ENCODE measurements at regions of chr3 and their contacts with region 1.

Region 1: GRCh38 chr3:146326670-146327543 is 76.0 kb upstream of the PLSCR4 start:
- DNase-seq: no peak
- H3K4me3 ChIP-seq: no peak overlapping the region
- H3K27ac ChIP-seq: no peak overlapping the region
- H3K4me1 ChIP-seq: no peaks in the 10 kb centered on the region
- H3K27me3 ChIP-seq: no peaks in the 10 kb centered on the region
- CTCF ChIP-seq: peak in 2 of 3 experiments; percentile 20 to 44; a peak in 2 of 4 replicates
- EP300 ChIP-seq: no peak
- POLR2A ChIP-seq: no peak
- RAD21 ChIP-seq: peak; percentile 73 to 80

Region 2: DNA sequence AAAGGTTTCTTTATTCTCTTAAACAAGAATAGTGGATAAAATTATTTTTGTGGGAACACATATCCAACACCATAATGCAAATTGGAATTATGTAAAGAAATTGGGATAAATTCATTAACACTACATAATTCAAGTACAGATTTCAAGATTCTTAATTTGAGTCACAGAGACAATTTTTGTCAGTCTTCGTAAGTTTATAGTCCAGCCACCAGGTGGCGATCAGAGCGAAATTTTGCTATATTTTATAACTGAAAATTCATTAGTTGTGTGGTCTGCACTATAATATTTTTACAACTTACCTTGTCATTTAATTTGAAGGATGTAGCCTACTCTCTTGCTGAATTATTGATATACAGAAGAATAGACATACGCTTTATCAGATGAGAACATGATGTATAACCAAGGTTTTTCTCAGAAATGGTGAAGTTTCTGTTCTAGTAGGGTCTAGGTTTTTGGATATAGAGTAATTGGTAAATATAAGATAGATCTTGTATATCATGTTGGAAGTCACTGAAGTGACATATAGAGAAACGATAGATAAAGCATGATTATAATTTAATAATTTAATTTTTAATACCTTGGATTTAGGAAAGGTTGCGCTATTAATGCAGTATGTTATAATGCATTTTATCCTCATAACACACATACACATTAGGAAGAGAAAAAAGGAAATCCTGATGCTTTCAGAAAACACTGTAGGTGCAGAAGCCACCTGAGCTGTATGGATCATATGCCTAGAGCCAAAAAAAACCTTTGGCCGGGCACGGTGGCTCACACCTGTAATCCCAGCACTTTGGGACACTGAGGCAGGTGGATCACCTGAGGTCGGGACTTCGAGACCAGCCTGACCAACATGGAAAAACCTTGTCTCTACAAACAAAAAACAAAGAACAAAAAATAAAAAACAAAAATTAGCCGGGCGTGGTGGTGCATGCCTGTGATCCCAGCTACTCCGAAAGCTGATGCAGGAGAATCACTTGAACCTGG is 107.7 kb before region 1 on chr3:
- CTCF ChIA-PET with region 1: interaction called, 17 read pairs
- POLR2A ChIA-PET with region 1: no interaction called
- DNase-seq: no peak
- H3K4me3 ChIP-seq: no peak overlapping the region
- H3K27ac ChIP-seq: no peak overlapping the region
- H3K4me1 ChIP-seq: no peaks in the 10 kb centered on the region
- H3K27me3 ChIP-seq: no peaks in the 10 kb centered on the region
- CTCF ChIP-seq: peak in 2 of 3 experiments; percentile 31 to 46; a peak in 2 of 4 replicates
- EP300 ChIP-seq: no peak
- POLR2A ChIP-seq: no peak
- RAD21 ChIP-seq: peak; percentile 56 to 67

Region 3: DNA sequence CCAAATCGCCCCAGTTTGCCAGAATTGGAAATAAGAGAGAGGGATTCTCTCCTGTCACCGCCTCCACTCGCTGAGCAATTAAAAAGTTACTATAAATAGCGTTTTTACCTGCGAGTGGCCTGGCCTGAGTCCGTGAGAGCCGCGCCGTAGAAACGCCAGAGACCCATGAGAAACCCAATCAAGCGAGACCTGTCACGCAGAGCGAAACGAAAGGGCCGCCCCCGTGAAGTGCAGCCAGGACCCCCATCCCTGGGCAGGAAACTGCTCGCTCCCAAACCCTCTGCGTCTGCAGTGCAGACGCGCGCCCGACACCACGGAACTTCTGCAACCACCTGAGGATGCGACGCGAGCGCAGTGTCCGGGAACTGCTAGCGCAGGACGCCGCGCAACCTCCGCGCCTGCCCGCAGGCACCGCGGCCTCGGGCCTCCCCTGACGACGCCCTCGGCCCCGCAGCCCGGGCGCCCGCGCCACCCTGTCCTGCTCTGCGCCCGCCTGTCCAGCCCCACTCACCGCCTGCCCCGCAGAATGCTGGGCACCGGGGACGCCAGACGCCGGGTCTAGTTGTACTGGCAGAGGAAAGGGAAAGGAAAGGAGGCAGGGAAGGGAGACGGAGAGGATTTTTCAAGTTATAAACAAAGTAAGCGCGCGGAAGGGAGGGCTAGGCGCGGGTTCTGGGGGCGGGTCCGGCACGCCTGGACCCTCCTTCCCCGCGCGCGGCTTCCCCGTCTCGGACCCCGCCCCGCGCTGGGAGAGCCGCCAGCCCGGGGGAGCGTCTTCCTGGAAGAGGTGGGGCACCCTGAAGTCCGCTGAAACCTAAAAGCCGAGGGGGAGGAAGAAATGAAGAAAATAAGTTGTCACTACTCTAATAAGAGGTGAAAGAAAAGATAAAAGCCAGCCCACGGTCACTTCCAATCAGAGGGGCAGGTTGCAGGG is 76.2 kb before region 1 on chr3 and contains the start of gene PLSCR4:
- CTCF ChIA-PET with region 1: no interaction called
- POLR2A ChIA-PET with region 1: no interaction called
- DNase-seq: peak in 1 of 2 experiments; percentile 65
- H3K4me3 ChIP-seq: peak within 1 kb of the TSS; percentile 48 to 71 (median 64)
- H3K27ac ChIP-seq: no peak within 1 kb of the TSS
- H3K4me1 ChIP-seq: peaks cover 0 to 2% (median 0%) of the 10 kb centered on the region in 4 experiments; a peak in 1 of 7 replicates
- H3K27me3 ChIP-seq: peaks cover 0 to 5% (median 2%) of the 10 kb centered on the region in 4 experiments; a peak in 2 of 7 replicates
- CTCF ChIP-seq: no peak
- EP300 ChIP-seq: no peak
- POLR2A ChIP-seq: no peak
- RAD21 ChIP-seq: no peak
- total RNA-seq, gene PLSCR4: 1.5 and 2.9 TPM in 2 replicates

Region 4: DNA sequence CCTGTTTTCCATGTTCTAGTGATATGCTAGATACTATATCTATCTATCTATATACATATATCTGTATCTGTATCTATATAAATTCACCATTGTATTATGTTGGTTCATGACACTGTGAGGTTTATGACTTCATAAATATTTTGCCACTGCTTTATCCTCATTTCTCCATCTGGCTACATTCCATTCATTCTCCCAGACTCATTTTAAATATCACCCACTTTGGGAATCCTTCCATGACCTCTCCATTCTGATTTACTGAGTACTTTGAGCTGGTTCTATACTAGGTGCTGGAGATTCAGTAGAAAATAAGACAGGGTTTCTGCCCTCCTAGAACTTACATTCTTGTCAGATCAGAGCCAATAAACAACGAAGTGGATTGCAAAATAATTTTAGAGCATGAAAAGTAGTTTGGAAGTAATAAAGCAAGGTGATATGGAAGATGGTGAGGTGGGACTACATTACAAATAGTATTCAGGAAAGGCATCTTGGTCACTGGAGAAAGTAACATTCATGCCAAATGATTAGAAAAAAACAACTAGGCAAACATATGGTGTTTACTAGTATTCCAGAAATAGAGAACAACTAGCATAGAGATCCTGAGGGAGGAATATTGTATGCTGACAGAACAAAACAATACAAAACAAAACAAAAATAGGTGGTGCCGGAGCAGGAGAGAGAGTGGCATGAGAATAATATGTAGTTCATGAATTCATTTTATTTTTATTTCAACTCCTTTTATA is 64.4 kb before region 1 on chr3:
- CTCF ChIA-PET with region 1: no interaction called
- POLR2A ChIA-PET with region 1: no interaction called
- DNase-seq: no peak
- H3K4me3 ChIP-seq: no peak overlapping the region
- H3K27ac ChIP-seq: no peak overlapping the region
- H3K4me1 ChIP-seq: peaks cover 0 to 7% (median 3%) of the 10 kb centered on the region in 4 experiments; a peak in 4 of 7 replicates
- H3K27me3 ChIP-seq: peaks cover 0 to 1% (median 0%) of the 10 kb centered on the region in 4 experiments; a peak in 1 of 7 replicates
- CTCF ChIP-seq: no peak
- EP300 ChIP-seq: no peak
- POLR2A ChIP-seq: no peak
- RAD21 ChIP-seq: no peak